WTC11 (cell line): ENCODE measurements at regions of chr1 and their contacts with region 1.

Region 1: DNA sequence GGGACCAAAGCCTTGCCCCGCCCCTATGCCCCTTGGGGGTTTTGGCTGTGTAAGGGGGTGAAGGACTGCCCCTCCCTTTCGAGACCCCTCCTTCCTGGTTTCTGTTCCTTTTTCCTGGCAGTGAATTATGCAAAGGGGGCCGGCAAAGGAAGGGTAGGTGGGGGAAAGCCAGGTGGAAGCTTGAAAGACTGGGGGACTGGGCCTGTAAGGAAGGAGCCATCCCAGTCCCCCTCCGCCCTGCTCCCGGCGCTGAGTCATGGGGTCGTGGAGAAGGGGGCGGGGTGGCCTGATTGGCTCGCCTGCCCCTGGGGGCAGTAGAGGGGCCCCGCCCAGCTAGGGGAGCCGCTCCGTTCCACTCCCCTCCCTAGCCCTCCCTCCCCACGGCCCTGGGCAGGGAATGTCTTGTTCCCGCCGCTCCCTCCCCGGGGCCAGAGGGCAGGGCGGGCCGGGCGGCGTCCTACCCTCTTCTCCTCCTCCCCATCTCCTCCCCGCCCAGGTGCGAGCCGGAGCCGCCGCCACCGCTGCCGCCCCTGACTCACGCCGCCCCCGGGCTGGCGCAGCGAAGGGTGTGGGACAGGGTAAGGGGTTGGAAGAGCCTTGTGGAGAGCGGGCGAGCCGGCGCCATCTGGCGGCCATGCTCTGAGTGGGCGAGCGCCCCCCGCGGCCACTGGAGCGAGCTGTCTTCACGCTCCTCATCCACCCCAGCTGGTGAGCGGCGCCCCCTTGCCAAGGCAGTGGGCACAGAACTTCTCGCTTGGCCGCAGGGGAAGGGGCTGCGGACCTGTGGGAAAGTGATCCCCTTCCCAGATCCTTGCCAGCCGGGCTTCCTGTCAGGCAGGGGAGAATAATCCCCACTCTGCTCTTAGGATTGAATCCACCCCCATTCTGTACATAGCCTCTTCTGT is 14.7 kb downstream of the ZBTB7B start:
- DNase-seq: peak; percentile 93
- ATAC-seq: peak; percentile 88
- H3K4me3 Mint-ChIP-seq: peak overlapping the region; percentile 62
- H3K27ac Mint-ChIP-seq: peak overlapping the region; percentile 70
- H3K4me1 Mint-ChIP-seq: peaks cover 46% of the 10 kb centered on the region
- H3K27me3 Mint-ChIP-seq: peaks cover 4% of the 10 kb centered on the region; the same call in 1 of the 2 replicates
- CTCF ChIP-seq: peak; percentile 84

Region 2: GRCh38 chr1:154796303-154796892 is 220.9 kb before region 1 on chr1:
- CTCF ChIA-PET with region 1: no interaction called
- POLR2A ChIA-PET with region 1: no interaction called
- DNase-seq: no peak
- ATAC-seq: no peak
- H3K4me3 Mint-ChIP-seq: no peak overlapping the region
- H3K27ac Mint-ChIP-seq: no peak overlapping the region
- H3K4me1 Mint-ChIP-seq: no peaks in the 10 kb centered on the region
- H3K27me3 Mint-ChIP-seq: no peaks in the 10 kb centered on the region
- CTCF ChIP-seq: no peak

Region 3: GRCh38 chr1:154837034-154837671 is 180.1 kb before region 1 on chr1:
- CTCF ChIA-PET with region 1: no interaction called
- POLR2A ChIA-PET with region 1: no interaction called
- DNase-seq: no peak
- ATAC-seq: no peak
- H3K4me3 Mint-ChIP-seq: no peak overlapping the region
- H3K27ac Mint-ChIP-seq: no peak overlapping the region
- H3K4me1 Mint-ChIP-seq: peaks cover 19% of the 10 kb centered on the region
- H3K27me3 Mint-ChIP-seq: no peaks in the 10 kb centered on the region
- CTCF ChIP-seq: no peak

Region 4: DNA sequence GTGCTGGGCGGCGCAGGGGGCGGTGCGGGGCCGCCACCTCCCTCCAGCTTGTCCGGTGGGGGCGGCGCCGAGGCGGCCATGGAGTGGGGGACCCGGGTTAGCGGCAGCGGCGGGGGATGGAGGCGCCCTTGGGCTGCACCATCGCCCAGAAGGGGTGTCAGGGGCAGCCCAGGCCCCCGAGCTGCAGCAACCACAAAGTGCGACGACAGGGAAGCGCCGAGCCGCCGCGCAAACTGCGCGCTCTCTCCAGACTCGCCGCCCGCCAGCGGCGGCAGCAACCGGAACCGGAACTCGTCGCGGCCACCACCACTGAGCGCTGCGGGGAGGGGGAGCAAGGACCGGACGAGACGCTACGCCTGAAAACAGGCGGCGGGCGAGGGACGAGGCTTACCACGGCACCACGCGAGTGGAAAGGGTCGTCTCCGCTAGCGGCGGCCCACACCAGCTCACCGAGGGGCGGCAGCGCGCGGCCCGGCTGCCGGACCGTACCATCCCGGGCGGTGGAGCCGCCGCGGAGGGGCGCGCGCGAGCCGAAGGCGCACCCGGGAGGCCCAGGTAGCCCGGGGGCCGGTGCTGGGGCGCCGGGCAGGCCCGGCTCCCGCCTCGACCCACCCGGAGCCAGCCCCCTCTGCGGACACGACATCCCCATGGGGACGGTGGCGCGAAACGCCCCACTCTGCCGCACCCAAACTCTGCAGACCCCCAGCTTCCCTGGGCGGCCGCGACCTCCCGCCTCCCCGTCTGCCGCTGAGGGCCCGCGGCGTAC is 55.6 kb before region 1 on chr1 and contains the start of gene PYGO2:
- CTCF ChIA-PET with region 1: interaction called, 10 read pairs
- POLR2A ChIA-PET with region 1: no interaction called
- DNase-seq: peak; percentile 83
- ATAC-seq: peak; percentile 66
- H3K4me3 Mint-ChIP-seq: peak within 1 kb of the TSS; percentile 93
- H3K27ac Mint-ChIP-seq: peak within 1 kb of the TSS; percentile 91
- H3K4me1 Mint-ChIP-seq: peaks cover 32% of the 10 kb centered on the region
- H3K27me3 Mint-ChIP-seq: no peaks in the 10 kb centered on the region
- CTCF ChIP-seq: no peak
- total RNA-seq, gene PYGO2: 37.4 to 38.8 TPM (median 38.0 TPM) in 3 replicates

Region 5: GRCh38 chr1:154982897-154983648 is 34.2 kb before region 1 on chr1 and contains the start of gene FLAD1:
- CTCF ChIA-PET with region 1: interaction called, 15 read pairs
- POLR2A ChIA-PET with region 1: interaction called, 6 read pairs
- DNase-seq: peak; percentile 98
- ATAC-seq: peak; percentile 99
- H3K4me3 Mint-ChIP-seq: no peak within 1 kb of the TSS
- H3K27ac Mint-ChIP-seq: peak within 1 kb of the TSS; percentile 70; the same call in 1 of the 2 replicates
- H3K4me1 Mint-ChIP-seq: peaks cover 10% of the 10 kb centered on the region
- H3K27me3 Mint-ChIP-seq: no peaks in the 10 kb centered on the region
- CTCF ChIP-seq: no peak
- total RNA-seq, gene FLAD1: 71.1 to 88.3 TPM (median 71.2 TPM) in 3 replicates

Region 6: DNA sequence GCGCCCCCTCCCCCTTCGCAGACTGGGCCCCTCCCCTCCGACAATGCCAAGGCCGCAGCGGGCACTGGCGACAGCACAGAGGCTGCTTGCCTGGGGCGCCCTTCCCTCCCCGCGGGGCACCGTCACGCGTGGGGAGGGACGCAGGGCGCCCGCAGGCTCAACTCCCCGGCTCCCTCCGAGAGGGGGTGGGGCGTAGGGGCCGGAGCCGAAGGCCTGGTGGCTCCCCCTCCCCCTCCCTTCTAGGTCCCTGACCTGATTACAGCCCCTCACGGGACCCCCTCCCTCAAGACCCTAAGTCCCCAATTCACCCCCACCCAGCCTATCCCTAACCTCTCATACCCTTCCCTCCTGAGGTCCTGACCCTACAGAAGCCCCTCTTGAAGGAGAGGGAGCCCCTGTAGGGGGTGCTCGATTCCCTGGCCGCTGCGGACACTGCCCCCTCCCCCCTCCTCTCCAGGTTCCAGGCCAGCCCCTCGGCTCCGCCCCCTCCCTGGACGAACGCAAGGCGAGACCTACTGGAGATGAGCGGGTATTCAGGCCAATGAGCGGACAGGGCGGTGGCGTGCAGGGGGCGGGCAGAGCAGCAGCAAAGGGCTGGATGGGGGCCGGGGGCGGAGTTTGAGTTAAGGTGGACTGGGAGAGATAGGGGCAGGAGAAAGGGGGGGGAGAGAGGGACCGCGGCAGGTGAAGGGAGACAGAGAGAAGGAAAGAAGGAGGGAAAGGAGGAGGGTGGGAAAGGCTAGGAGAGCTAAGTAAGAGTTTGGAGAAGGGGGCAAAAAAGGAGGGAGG is 15.4 kb before region 1 on chr1:
- CTCF ChIA-PET with region 1: interaction called, 79 read pairs
- POLR2A ChIA-PET with region 1: interaction called, 28 read pairs
- DNase-seq: peak; percentile 100
- ATAC-seq: peak; percentile 73
- H3K4me3 Mint-ChIP-seq: peak overlapping the region; percentile 88
- H3K27ac Mint-ChIP-seq: peak overlapping the region; percentile 57; the same call in 1 of the 2 replicates
- H3K4me1 Mint-ChIP-seq: peaks cover 39% of the 10 kb centered on the region
- H3K27me3 Mint-ChIP-seq: no peaks in the 10 kb centered on the region; the same call in 1 of the 2 replicates
- CTCF ChIP-seq: no peak

Region 7: GRCh38 chr1:155044812-155045690 is 27.8 kb after region 1 on chr1:
- CTCF ChIA-PET with region 1: interaction called, 40 read pairs
- POLR2A ChIA-PET with region 1: interaction called, 4 read pairs
- DNase-seq: peak; percentile 77
- ATAC-seq: peak; percentile 92
- H3K4me3 Mint-ChIP-seq: no peak overlapping the region
- H3K27ac Mint-ChIP-seq: no peak overlapping the region
- H3K4me1 Mint-ChIP-seq: peaks cover 35% of the 10 kb centered on the region
- H3K27me3 Mint-ChIP-seq: no peaks in the 10 kb centered on the region; the same call in none of the 2 replicates
- CTCF ChIP-seq: no peak; the same call in 1 of the 2 replicates

Region 8: GRCh38 chr1:155070721-155071569 is 53.7 kb after region 1 on chr1:
- CTCF ChIA-PET with region 1: interaction called, 10 read pairs
- POLR2A ChIA-PET with region 1: interaction called, 5 read pairs
- DNase-seq: peak; percentile 94
- ATAC-seq: peak; percentile 78
- H3K4me3 Mint-ChIP-seq: peak overlapping the region; percentile 75
- H3K27ac Mint-ChIP-seq: no peak overlapping the region
- H3K4me1 Mint-ChIP-seq: peaks cover 41% of the 10 kb centered on the region
- H3K27me3 Mint-ChIP-seq: peaks cover 33% of the 10 kb centered on the region
- CTCF ChIP-seq: peak; percentile 52; the same call in 1 of the 2 replicates